ENCODE measurements at regions of chrX and their contacts with region 1.

Region 1: DNA sequence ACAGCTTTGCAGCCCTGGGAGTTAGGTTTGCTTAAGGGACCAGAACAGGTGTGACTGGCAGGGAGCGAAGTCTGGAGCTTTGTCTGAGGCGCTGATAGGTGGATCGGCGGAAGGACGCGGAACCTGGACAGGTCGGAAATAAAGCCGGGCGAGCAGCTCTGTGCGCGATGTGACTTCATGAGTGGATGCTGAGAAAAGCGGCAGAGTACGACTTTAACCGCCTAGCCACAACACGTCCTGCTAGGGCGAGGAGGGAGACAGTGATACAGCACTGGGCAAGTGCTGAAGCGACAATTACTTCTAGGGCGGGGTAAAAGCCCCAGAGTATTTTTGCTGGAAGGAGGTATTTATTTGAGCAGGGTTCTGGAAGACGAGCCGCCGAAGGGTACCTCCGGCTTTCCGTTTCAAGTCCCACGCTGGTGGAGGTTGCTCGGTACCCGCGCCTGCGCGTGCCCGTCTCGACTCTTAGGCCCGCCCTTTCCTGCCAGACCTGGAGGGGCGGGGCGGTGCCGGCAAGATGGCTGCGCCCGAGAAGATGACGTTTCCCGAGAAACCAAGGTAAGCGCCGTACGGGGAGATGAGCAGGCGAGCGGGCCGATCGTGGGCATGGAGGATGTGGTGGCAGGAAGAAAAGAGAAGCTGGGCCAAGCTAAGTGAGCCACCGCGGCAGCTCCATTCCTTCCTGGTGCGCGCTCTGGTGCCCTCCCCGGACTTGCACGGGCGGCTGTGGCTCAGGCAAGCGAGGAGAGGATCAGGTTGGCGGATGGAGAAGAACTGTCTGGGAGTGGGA is at the start of gene ZRSR2:
- DNase-seq: peak; percentile 91
- H3K4me3 Mint-ChIP-seq: no peak within 1 kb of the TSS
- H3K27ac Mint-ChIP-seq: no peak within 1 kb of the TSS
- H3K4me1 Mint-ChIP-seq: peaks cover 26% of the 10 kb centered on the region
- H3K27me3 Mint-ChIP-seq: no peaks in the 10 kb centered on the region
- total RNA-seq, gene ZRSR2: 16.2 to 17.3 TPM

Region 2: GRCh38 chrX:15493118-15493962 is 296.8 kb before region 1 on chrX and contains the start of gene PIR:
- CTCF ChIA-PET with region 1: no interaction called
- POLR2A ChIA-PET with region 1: no interaction called
- intact Hi-C with region 1: loop called (anchors 10 kb)
- DNase-seq: peak; percentile 80
- H3K4me3 Mint-ChIP-seq: peak within 1 kb of the TSS; percentile 79
- H3K27ac Mint-ChIP-seq: peak within 1 kb of the TSS; percentile 31
- H3K4me1 Mint-ChIP-seq: peaks cover 4% of the 10 kb centered on the region
- H3K27me3 Mint-ChIP-seq: no peaks in the 10 kb centered on the region
- total RNA-seq, gene PIR: 2.4 to 3.1 TPM

Region 3: GRCh38 chrX:15737960-15738902 is 51.9 kb before region 1 on chrX and contains the start of gene CA5B:
- CTCF ChIA-PET with region 1: interaction called, 4 read pairs
- POLR2A ChIA-PET with region 1: interaction called, 7 read pairs
- intact Hi-C with region 1: loop called (anchors 2 kb)
- DNase-seq: peak; percentile 97
- H3K4me3 Mint-ChIP-seq: peak within 1 kb of the TSS; percentile 87
- H3K27ac Mint-ChIP-seq: peak within 1 kb of the TSS; percentile 80
- H3K4me1 Mint-ChIP-seq: peaks cover 38% of the 10 kb centered on the region
- H3K27me3 Mint-ChIP-seq: no peaks in the 10 kb centered on the region
- total RNA-seq, gene CA5B: 13.1 to 15.5 TPM

Region 4: DNA sequence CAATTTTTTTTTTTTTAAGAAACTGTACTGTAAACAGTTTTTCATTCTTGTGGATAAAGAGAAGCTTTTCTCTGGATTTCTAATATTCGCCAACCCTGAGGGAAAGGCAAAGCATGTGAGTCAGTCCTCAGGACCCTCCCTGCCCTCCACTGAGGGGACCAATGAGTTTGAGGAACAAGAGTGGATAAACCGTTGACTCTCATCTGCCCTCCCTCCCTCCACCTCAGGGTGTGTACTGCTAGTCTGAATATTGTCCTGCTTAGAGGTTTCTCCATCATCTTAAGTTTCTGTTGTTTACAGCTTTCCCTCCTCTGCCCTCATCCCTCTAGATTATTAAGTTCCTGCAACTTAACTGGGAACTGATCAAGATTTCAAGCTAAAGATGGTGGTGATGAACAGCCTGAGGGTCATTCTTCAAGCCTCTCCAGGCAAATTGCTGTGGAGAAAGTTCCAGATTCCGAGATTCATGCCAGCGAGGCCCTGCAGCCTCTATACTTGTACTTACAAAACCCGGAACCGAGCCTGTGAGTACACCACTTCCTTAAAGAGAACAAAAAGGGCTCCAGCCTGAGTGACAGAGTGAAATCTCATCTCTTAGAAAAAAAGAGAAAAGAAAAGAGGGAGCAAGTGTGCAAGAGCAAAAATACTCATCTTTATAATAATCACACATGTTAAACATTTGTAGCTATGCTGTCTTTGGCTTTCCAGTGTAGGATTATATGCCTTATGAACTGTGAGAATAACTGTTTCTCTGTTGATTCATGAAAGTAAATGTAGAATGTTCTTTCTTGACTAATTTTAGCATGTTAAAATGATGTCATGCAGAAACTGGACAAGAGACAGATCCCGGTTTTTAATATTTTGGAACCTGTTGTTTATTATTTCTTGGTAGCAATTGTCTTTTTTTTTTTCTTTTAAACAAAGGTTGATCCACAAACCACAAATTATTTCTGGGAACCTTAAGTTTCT is 40.2 kb before region 1 on chrX:
- CTCF ChIA-PET with region 1: no interaction called
- POLR2A ChIA-PET with region 1: no interaction called
- intact Hi-C with region 1: loop called (anchors 5 kb)
- DNase-seq: peak; percentile 35
- H3K4me3 Mint-ChIP-seq: peak overlapping the region; percentile 53
- H3K27ac Mint-ChIP-seq: peak overlapping the region; percentile 94
- H3K4me1 Mint-ChIP-seq: peaks cover 67% of the 10 kb centered on the region
- H3K27me3 Mint-ChIP-seq: no peaks in the 10 kb centered on the region

Measured in activated CD4-positive, alpha-beta memory T cell treated with anti-CD3 and anti-CD28 coated beads for 36 hours (primary cell).